Heart right ventricle (tissue), 16 donors: ENCODE measurements at regions of chr20 and their contacts with region 1.

Region 1: DNA sequence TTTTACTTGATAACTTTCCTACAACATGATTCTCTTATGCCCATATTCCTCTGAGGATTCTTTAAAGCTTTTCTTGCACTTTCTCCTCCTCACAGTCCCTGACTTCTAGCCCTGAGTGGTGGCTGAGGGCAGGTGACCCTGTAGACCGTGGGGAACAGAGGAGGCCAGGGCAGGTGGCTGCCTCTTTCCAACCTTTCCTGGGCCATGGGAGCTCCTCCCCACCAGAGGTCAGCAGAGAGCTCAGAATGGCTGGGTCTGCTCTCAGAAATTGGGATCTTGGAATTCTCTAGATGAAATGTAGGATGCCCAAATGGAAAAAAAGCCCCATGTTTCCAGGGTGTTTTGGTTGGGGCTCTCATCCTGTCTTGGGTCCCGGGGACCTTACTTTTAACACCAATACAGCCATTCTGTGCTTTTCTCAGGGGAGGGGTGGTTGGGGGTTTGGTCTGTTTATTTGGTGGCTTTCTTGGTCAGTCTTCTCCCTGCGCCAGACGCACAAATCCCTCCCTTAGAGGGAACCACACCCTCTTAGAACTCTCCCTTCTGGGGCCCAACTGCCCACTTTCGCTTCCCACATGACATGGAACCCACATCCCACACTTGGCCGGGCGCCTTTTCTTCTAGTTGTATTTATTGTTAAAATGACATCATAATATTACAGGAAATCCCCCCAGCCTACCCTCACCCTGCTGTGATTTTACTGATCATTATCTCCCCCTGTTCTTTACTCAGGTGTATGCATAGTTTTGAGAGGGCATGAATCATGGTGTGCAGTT is 17.9 kb downstream of the GNAS start:
- DNase-seq: peak; percentile 58 to 75
- ATAC-seq: peak; percentile 71 to 92 (median 82)
- H3K4me3 ChIP-seq: no peak overlapping the region
- H3K27ac ChIP-seq: no peak overlapping the region
- H3K4me1 ChIP-seq: peaks cover 0 to 6% (median 0%) of the 10 kb centered on the region in 9 donors
- H3K27me3 ChIP-seq: no peaks in the 10 kb centered on the region
- CTCF ChIP-seq: peak; percentile 71 to 95 (median 90)

Region 2: DNA sequence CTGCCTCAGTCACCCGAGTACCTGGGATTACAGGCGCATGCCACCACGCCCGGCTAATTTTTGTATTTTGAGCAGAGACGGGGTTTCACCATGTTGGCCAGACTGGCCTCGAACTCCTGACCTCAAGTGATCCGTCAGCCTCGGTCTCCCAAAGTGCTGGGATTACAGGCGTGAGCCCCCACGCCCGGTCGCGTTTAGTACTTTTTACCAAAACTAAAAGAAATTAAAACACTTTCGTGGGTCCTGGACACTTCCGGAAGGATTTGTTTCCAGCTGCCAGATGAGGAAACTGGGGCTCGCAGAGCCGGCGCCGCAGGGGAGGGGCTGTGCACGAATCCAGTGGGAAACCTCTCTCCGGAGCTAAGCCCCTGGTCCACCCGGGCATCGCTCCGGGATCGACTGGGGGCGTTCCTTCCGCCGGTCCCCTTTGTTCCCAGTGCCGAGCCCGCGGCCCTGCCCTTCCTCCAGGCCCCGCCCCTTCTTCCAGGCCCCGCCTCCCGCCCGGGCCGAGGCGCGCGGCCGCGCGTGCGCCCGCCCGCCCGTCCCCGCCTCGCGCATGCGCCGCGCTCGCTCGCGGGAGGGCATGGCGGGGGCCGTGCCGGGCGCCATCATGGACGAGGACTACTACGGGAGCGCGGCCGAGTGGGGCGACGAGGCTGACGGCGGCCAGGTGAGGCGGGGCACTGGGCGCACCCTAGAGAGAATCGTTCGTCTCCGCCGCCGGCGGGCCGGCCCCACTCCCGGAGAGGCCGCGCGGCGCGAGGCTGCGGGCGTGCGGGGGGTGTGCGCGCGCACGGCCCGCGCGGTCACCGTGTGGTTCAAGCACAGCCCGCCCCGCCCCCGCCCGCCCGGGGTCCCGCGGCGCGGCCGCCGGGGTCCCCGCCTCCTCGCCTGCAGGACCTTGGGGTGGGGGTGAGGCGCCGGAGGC is 110.5 kb after region 1 on chr20 and contains the start of gene NELFCD:
- intact Hi-C with region 1: loop called in 1 of 10 experiments (anchors 5 kb)
- DNase-seq: peak; percentile 86 to 92
- ATAC-seq: peak; percentile 92 to 97 (median 94)
- H3K4me3 ChIP-seq: peak within 1 kb of the TSS; percentile 47 to 82 (median 68)
- H3K27ac ChIP-seq: peak within 1 kb of the TSS; percentile 63 to 91 (median 87)
- H3K4me1 ChIP-seq: peaks cover 0 to 45% (median 35%) of the 10 kb centered on the region in 9 donors
- H3K27me3 ChIP-seq: no peaks in the 10 kb centered on the region
- CTCF ChIP-seq: no peak
- total RNA-seq, gene NELFCD: 23.2 to 40.5 (median 31.1) TPM

Region 3: DNA sequence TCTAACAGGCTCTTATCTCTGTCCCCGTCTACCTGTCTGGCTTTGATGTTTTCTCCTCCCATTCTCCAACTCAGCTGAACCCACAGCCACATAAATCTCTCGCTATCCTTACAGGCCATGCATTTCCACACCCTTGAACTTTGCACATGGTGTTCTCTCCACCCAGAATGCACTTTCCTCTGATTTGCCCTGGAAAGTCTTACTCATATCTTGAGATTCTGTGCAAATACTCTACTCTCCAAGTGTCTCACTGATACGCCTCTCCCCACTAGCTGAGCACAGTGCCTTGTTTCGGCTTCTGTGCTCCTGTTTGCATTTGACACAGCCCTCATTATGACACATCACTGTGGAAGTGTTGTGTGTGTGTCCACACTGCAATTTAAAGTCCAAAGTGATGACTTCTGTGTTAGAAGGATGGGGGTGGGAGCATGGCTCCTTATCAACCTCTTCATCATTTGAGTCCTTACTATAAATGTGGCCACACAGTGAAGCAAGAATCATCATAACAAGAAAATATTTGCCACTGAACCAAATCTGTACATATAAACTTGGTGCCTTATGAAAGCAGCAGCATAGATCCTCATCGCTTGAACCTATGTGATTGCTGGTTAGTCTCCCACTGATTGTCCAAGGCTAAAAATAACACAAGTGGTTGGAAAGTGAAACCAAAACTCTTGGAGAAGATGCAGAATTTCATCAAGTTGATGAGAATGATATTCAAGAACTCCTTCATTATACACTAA is 177.7 kb after region 1 on chr20:
- intact Hi-C with region 1: loop called in 2 of 10 experiments (anchors 5 to 10 kb)
- DNase-seq: no peak
- ATAC-seq: peak in 1 of 8 donors; percentile 13
- H3K4me3 ChIP-seq: no peak overlapping the region
- H3K27ac ChIP-seq: no peak overlapping the region
- H3K4me1 ChIP-seq: peaks cover 3 to 11% (median 4%) of the 10 kb centered on the region in 9 donors
- H3K27me3 ChIP-seq: peaks cover 0 to 24% (median 5%) of the 10 kb centered on the region in 7 donors
- CTCF ChIP-seq: no peak

Region 4: GRCh38 chr20:59063358-59064213 is 193.2 kb after region 1 on chr20:
- intact Hi-C with region 1: no loop called
- DNase-seq: peak; percentile 42 to 56
- ATAC-seq: peak; percentile 69 to 99 (median 96)
- H3K4me3 ChIP-seq: peak overlapping the region in 6 of 10 donors; percentile 1 to 39 (median 10)
- H3K27ac ChIP-seq: peak overlapping the region in 8 of 10 donors; percentile 19 to 70 (median 58)
- H3K4me1 ChIP-seq: peaks cover 0 to 21% (median 14%) of the 10 kb centered on the region in 9 donors
- H3K27me3 ChIP-seq: peaks cover 0 to 25% (median 0%) of the 10 kb centered on the region in 7 donors
- CTCF ChIP-seq: no peak

Region 5: DNA sequence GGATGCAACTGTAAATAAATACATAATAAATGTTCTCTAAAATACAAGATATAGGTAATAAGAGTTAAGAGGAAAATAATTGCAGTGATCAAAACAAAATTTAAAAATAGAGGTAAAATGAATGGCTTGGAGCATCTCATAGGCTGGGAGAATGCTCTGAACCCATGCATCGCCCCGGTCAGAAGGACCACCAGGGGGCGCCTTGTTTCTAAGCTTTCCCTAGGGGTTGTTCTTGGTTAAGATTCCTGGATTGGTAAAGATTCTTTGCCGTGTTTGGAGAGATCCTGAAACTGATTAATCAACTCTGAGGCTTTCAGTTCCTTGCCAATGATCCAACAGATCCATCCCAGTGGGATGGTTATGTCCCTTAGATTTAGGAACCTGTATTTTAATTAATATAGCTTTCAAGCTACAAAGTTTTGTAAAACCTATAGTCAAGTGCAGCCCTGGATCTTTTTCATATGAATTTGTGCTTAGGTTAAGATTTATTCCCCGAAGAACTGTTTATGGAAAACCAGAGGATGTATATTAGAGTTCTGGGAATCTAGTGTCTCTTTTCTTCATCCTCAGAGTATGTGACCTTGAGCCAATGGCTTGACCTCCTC is 217.5 kb after region 1 on chr20:
- intact Hi-C with region 1: loop called in 5 of 10 experiments (anchors 2 to 10 kb)
- DNase-seq: peak; percentile 81 to 84
- ATAC-seq: peak in 6 of 8 donors; percentile 74 to 88 (median 86)
- H3K4me3 ChIP-seq: no peak overlapping the region
- H3K27ac ChIP-seq: no peak overlapping the region
- H3K4me1 ChIP-seq: peaks cover 0 to 17% (median 0%) of the 10 kb centered on the region in 9 donors
- H3K27me3 ChIP-seq: peaks cover 0 to 9% (median 0%) of the 10 kb centered on the region in 7 donors
- CTCF ChIP-seq: peak; percentile 80 to 97 (median 94)

Region 6: GRCh38 chr20:59222253-59223181 is 352.1 kb after region 1 on chr20:
- intact Hi-C with region 1: loop called in 9 of 10 experiments (anchors 1 to 5 kb)
- DNase-seq: peak; percentile 77 to 87
- ATAC-seq: peak; percentile 85 to 95 (median 93)
- H3K4me3 ChIP-seq: peak overlapping the region; percentile 22 to 64 (median 60)
- H3K27ac ChIP-seq: peak overlapping the region in 9 of 10 donors; percentile 25 to 84 (median 75)
- H3K4me1 ChIP-seq: peaks cover 9 to 28% (median 21%) of the 10 kb centered on the region in 9 donors
- H3K27me3 ChIP-seq: peaks cover 0 to 52% (median 33%) of the 10 kb centered on the region in 7 donors
- CTCF ChIP-seq: peak; percentile 90 to 99 (median 96)

Region 7: DNA sequence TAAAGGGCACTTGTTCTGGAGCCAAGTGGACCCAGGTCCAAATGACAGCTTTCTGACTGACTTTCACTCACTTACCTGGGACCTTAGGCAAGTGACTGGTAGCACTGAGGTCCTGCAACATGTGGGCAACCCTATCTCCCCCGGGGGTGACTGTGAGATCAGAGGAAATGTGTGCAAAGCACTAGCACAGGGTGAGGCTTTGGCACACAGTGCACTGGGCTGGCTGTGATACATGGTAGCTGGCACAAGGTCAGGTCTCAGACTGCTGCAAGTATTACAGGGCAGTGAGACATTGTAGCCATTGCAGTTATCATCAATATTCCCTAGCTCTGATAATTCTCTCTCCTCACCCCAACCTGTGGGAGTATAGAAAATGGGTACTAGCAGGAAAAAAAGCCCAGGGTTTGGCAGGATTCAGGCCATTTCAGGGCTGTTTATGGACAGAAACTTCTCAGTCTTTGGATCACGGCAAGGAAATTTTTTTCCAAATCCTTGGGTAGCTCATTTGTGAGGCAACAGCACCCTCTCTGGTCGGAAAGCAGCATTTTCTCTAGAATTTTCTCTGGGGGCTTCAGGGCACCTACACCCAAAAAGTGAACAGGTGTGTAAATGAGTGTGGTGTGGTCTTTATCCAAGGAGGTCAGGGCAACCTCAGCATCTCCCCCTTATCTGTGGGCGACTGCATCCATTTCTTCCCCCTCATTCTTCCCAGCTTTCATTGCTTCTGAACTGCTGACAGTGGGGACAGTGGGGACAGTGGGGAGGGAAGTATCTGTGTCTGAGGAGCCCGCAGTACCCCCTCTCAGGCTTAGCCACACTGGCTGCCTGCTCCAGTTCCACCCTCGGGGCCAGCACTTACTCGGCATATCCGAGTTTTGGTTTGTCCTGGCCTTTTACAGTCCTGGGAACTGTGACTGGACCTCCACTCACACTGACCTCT is 585.2 kb after region 1 on chr20:
- intact Hi-C with region 1: loop called in 3 of 10 experiments (anchors 5 kb)
- DNase-seq: peak in 1 of 2 donors; percentile 28
- ATAC-seq: peak in 7 of 8 donors; percentile 39 to 86 (median 54)
- H3K4me3 ChIP-seq: no peak overlapping the region
- H3K27ac ChIP-seq: no peak overlapping the region
- H3K4me1 ChIP-seq: peaks cover 0 to 16% (median 4%) of the 10 kb centered on the region in 9 donors
- H3K27me3 ChIP-seq: peaks cover 0 to 43% (median 15%) of the 10 kb centered on the region in 7 donors
- CTCF ChIP-seq: peak; percentile 11 to 66 (median 55)